AG04449 (cell line): ENCODE measurements at regions of chr13 and their contacts with region 1.

Region 1: DNA sequence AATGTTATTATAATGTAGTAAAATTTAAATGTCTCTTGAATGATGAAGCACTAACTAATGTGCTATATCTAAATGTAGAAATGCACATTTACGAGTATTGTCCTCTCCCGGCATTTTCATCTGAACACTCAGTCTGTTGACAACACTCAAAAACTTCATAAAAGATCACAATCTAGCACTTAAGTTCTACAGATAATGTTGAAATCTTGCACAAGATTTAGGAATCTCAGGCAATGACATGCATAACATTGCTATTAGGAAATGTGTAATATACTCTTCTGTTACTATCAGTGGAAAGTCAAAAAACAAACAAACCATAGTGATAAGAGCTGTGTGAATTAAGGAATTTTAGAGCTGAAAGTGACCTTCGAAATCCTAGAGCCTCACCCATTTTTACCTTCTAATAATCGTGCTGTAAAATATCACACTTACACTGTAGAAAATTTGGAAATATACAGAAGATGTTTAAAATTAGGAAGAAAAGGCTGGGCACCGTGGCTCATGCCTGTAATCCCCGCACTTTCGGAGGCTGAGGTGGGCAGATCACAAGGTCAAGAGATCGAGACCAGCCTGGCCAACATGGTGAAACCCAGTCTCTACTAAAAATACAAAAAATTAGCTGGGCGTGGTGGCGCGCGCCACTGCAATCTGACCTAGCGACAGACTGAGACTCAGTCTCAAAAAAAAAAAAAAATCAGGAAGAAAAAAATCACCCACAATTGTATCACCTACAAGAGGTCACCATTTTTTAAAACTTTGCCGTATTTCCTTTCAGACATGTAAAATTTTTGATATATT is 37.7 kb upstream of the XPO4 start:
- DNase-seq: peak; percentile 21
- H3K4me3 ChIP-seq: no peak overlapping the region
- CTCF ChIP-seq: no peak

Region 2: GRCh38 chr13:20997430-20998161 is 57.3 kb after region 1 on chr13:
- CTCF ChIA-PET with region 1: interaction called, 10 read pairs
- POLR2A ChIA-PET with region 1: no interaction called
- DNase-seq: peak; percentile 93
- H3K4me3 ChIP-seq: peak overlapping the region; percentile 16
- CTCF ChIP-seq: no peak

Region 3: DNA sequence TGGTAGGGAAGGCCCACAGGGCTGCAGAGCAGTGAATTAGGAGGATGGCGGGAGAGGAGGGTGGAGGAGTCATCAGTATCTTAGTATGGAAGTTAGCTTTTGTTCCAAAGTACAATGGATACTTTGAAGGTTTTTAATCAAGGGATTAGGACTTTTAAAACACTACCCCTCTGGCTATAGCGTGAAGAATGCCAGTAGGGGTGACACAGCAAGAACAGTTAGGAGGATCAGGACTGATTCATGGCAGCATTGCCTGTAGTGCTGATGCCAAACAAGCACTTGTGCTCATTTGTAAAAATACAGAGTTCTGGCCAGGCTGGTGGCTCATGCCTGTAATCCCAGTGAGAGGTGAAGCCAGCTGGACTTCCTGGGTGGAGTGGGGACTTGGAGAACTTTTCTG is 189.8 kb after region 1 on chr13:
- CTCF ChIA-PET with region 1: interaction called, 59 read pairs
- POLR2A ChIA-PET with region 1: no interaction called
- DNase-seq: no peak
- H3K4me3 ChIP-seq: no peak overlapping the region
- CTCF ChIP-seq: no peak

Region 4: GRCh38 chr13:21137696-21138095 is 197.4 kb after region 1 on chr13:
- CTCF ChIA-PET with region 1: interaction called, 59 read pairs
- POLR2A ChIA-PET with region 1: no interaction called
- DNase-seq: no peak
- H3K4me3 ChIP-seq: no peak overlapping the region
- CTCF ChIP-seq: no peak